Activated T-helper 2 cell treated with anti-CD3 and anti-CD28 coated beads, Interferon-gamma antibody, Interleukin-2, Interleukin-4, amounts not matched to agents 10 μg/mL and 5 μg/mL and 100 μg/mL, durations not matched to agents 14 hours and 24 hours and 36 hours (primary cell): ENCODE measurements at regions of chr2 and their contacts with region 1.

Region 1: GRCh38 chr2:190679813-190680591 is 31.1 kb downstream of the NAB1 start:
- DNase-seq: peak; percentile 29
- H3K4me3 Mint-ChIP-seq: peak overlapping the region; percentile 51
- H3K27ac Mint-ChIP-seq: peak overlapping the region; percentile 92
- H3K4me1 Mint-ChIP-seq: peaks cover 45% of the 10 kb centered on the region
- H3K27me3 Mint-ChIP-seq: no peaks in the 10 kb centered on the region

Region 2: GRCh38 chr2:190664240-190664639 is 15.8 kb before region 1 on chr2:
- intact Hi-C with region 1: loop called (anchors 2 kb)
- DNase-seq: no peak
- H3K4me3 Mint-ChIP-seq: no peak overlapping the region
- H3K27ac Mint-ChIP-seq: no peak overlapping the region
- H3K4me1 Mint-ChIP-seq: peaks cover 31% of the 10 kb centered on the region
- H3K27me3 Mint-ChIP-seq: no peaks in the 10 kb centered on the region

Region 3: DNA sequence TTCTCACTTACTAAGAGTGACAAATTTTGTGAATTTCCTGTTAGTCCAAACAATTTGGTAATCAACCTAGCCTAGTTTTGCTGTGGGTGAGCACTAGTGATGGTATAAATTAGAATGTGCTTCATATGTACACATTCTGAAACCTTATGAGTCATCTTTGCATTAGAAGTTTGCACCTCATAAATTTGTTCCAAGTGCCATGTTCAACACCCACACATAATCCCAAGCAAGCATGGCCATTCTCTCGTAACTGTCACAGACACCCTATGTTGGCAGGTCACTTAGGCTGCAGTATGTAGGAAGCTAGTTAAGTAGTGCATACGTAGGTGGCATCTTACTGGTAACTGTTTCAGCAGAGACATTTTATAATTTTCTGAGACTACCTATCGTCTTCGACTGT is 15.7 kb after region 1 on chr2:
- intact Hi-C with region 1: loop called (anchors 1 kb)
- DNase-seq: no peak
- H3K4me3 Mint-ChIP-seq: no peak overlapping the region
- H3K27ac Mint-ChIP-seq: peak overlapping the region; percentile 18
- H3K4me1 Mint-ChIP-seq: peaks cover 24% of the 10 kb centered on the region
- H3K27me3 Mint-ChIP-seq: no peaks in the 10 kb centered on the region